A549 (cell line): ENCODE measurements at regions of chr19 and their contacts with region 1.

Region 1: GRCh38 chr19:46076951-46077816 is 36.4 kb upstream of the IGFL4 start:
- DNase-seq: peak; percentile 90 to 95
- ATAC-seq: peak; percentile 94 to 95
- H3K4me3 ChIP-seq: peak overlapping the region; percentile 59
- H3K27ac ChIP-seq: peak overlapping the region; percentile 72 to 86
- H3K4me1 ChIP-seq: peaks cover 45% of the 10 kb centered on the region
- CTCF ChIP-seq: peak; percentile 100
- EP300 ChIP-seq: no peak
- POLR2A ChIP-seq: no peak
- RAD21 ChIP-seq: peak; percentile 99 to 100

Region 2: GRCh38 chr19:45805719-45806118 is 271.5 kb before region 1 on chr19:
- CTCF ChIA-PET with region 1: no interaction called
- POLR2A ChIA-PET with region 1: no interaction called
- DNase-seq: no peak
- ATAC-seq: no peak
- H3K4me3 ChIP-seq: no peak overlapping the region
- H3K27ac ChIP-seq: no peak overlapping the region
- H3K4me1 ChIP-seq: peaks cover 14% of the 10 kb centered on the region
- CTCF ChIP-seq: no peak
- EP300 ChIP-seq: no peak
- POLR2A ChIP-seq: no peak
- RAD21 ChIP-seq: no peak

Region 3: GRCh38 chr19:45994989-45995714 is 82.0 kb before region 1 on chr19 and contains the start of gene CCDC61:
- CTCF ChIA-PET with region 1: interaction called, 21 read pairs
- POLR2A ChIA-PET with region 1: no interaction called
- DNase-seq: peak; percentile 99 to 100
- ATAC-seq: peak; percentile 96 to 98
- H3K4me3 ChIP-seq: peak within 1 kb of the TSS; percentile 57
- H3K27ac ChIP-seq: peak within 1 kb of the TSS; percentile 72 to 88
- H3K4me1 ChIP-seq: peaks cover 5% of the 10 kb centered on the region
- CTCF ChIP-seq: no peak
- EP300 ChIP-seq: no peak
- POLR2A ChIP-seq: peak; percentile 93
- RAD21 ChIP-seq: no peak
- polyA plus RNA-seq, gene CCDC61: 3.2 and 4.1 TPM in 2 replicates

Region 4: GRCh38 chr19:46030812-46031550 is 46.2 kb before region 1 on chr19:
- CTCF ChIA-PET with region 1: interaction called, 1,009 read pairs
- POLR2A ChIA-PET with region 1: interaction called, 16 read pairs
- DNase-seq: no peak
- ATAC-seq: no peak
- H3K4me3 ChIP-seq: no peak overlapping the region
- H3K27ac ChIP-seq: peak overlapping the region in 1 of 2 experiments; percentile 39; a peak in 3 of 6 replicates
- H3K4me1 ChIP-seq: no peaks in the 10 kb centered on the region; the same call in 2 of the 3 replicates
- CTCF ChIP-seq: no peak
- EP300 ChIP-seq: no peak
- POLR2A ChIP-seq: no peak
- RAD21 ChIP-seq: no peak

Region 5: DNA sequence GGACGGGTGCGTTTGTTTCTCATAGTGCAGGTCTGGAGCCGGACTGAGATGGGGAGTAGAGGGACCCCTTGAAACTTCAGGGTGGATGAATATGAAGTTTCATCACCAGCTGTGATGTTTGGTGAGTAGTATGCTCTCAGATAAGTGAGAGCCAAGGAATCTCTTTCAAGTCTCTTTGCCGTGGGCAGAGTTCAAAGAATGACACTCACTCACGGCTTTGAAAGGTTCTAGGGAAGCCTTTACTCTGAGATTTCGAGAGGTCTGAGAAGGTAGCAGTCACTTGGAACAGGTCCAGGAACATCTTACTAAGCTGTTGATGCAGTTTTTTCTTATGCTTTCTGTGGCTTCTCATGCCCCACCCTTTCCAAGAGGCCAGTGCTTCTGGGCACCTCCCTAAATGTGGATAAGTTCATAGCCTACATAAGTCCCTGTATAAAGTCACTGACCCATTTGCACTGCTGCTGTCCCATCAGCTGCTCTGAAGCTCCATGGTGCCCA is 70.7 kb after region 1 on chr19 and contains the start of gene IGFL2:
- CTCF ChIA-PET with region 1: interaction called, 10 read pairs
- POLR2A ChIA-PET with region 1: no interaction called
- DNase-seq: no peak
- ATAC-seq: no peak
- H3K4me3 ChIP-seq: no peak within 1 kb of the TSS
- H3K27ac ChIP-seq: no peak within 1 kb of the TSS
- H3K4me1 ChIP-seq: 0 out of 3 replicates have a peak, but pooled peaks cover 2% of the 10 kb centered on the region
- CTCF ChIP-seq: no peak
- EP300 ChIP-seq: no peak
- POLR2A ChIP-seq: no peak
- RAD21 ChIP-seq: no peak
- polyA plus RNA-seq, gene IGFL2: 0.78 and 1.9 TPM in 2 replicates

Region 6: DNA sequence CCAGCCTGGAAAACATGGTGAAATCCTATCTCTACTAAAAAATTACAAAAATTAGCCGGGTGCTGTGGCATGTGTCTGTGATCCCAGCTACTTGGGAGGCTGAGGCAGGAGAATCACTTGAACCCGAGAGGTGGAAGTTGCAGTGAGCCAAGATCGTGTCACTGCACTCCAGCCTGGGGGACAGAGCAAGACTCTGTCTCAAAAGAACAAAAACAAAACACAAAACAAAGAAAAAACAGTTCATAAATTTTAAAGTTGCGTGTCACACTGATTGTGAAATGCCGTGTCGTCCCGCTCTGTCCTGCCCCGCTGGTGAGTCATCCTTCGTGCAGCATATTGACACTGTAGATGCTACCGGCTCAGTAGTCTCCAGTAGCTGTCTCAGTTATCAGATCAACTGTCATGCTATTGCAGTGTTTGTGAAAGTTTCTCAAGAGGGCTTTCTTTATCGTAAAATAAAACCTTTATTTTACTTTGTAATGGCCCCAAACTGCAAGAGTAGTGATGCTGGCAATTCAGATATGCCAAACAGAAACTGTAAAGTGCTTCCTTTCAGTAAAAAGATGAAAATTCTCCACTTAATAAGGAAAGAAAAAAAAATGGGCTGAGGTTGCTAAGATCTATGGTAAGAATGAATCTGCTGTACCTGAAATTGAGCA is 115.9 kb after region 1 on chr19:
- CTCF ChIA-PET with region 1: interaction called, 390 read pairs
- POLR2A ChIA-PET with region 1: no interaction called
- DNase-seq: peak; percentile 84 to 91
- ATAC-seq: peak; percentile 37 to 76; a peak in 4 of 6 replicates
- H3K4me3 ChIP-seq: no peak overlapping the region
- H3K27ac ChIP-seq: peak overlapping the region; percentile 64 to 83
- H3K4me1 ChIP-seq: peaks cover 95% of the 10 kb centered on the region
- CTCF ChIP-seq: no peak
- EP300 ChIP-seq: peak in 1 of 2 experiments; percentile 49; a peak in 2 of 5 replicates
- POLR2A ChIP-seq: no peak
- RAD21 ChIP-seq: peak in 1 of 2 experiments; percentile 39; a peak in 1 of 5 replicates

Region 7: DNA sequence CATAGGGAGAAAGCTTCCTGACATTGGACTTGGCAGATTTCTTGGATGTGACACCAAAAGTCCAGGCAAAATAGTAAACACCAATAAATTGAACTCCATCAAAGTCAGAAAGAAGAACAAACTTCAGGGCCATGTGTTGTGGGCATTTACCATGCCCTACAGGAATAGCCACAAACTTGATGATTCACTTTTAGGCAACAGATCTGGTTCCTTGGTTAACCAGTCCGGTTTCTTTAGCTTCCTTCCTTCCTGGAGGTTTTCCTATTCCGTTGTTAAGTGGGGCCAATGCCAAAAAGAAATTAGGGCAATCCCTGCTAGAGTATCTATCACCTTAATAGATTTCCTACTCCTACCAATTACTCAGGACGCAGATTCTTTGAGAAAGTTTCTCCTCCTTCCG is 177.6 kb after region 1 on chr19:
- CTCF ChIA-PET with region 1: interaction called, 854 read pairs
- POLR2A ChIA-PET with region 1: interaction called, 3 read pairs
- DNase-seq: no peak
- ATAC-seq: no peak
- H3K4me3 ChIP-seq: no peak overlapping the region
- H3K27ac ChIP-seq: no peak overlapping the region
- H3K4me1 ChIP-seq: peaks cover 21% of the 10 kb centered on the region
- CTCF ChIP-seq: no peak
- EP300 ChIP-seq: no peak
- POLR2A ChIP-seq: no peak
- RAD21 ChIP-seq: no peak

Region 8: GRCh38 chr19:46542428-46543230 is 465.4 kb after region 1 on chr19:
- CTCF ChIA-PET with region 1: interaction called, 10 read pairs
- POLR2A ChIA-PET with region 1: no interaction called
- DNase-seq: peak; percentile 69 to 94
- ATAC-seq: peak; percentile 90 to 92
- H3K4me3 ChIP-seq: no peak overlapping the region
- H3K27ac ChIP-seq: no peak overlapping the region
- H3K4me1 ChIP-seq: no peaks in the 10 kb centered on the region
- CTCF ChIP-seq: peak; percentile 98
- EP300 ChIP-seq: no peak
- POLR2A ChIP-seq: no peak
- RAD21 ChIP-seq: peak; percentile 91 to 93